Activated B cell treated with CpG ODN at 0.5 μM for 24 hours (primary cell): ENCODE measurements at regions of chr5 and their contacts with region 1.

Region 1: DNA sequence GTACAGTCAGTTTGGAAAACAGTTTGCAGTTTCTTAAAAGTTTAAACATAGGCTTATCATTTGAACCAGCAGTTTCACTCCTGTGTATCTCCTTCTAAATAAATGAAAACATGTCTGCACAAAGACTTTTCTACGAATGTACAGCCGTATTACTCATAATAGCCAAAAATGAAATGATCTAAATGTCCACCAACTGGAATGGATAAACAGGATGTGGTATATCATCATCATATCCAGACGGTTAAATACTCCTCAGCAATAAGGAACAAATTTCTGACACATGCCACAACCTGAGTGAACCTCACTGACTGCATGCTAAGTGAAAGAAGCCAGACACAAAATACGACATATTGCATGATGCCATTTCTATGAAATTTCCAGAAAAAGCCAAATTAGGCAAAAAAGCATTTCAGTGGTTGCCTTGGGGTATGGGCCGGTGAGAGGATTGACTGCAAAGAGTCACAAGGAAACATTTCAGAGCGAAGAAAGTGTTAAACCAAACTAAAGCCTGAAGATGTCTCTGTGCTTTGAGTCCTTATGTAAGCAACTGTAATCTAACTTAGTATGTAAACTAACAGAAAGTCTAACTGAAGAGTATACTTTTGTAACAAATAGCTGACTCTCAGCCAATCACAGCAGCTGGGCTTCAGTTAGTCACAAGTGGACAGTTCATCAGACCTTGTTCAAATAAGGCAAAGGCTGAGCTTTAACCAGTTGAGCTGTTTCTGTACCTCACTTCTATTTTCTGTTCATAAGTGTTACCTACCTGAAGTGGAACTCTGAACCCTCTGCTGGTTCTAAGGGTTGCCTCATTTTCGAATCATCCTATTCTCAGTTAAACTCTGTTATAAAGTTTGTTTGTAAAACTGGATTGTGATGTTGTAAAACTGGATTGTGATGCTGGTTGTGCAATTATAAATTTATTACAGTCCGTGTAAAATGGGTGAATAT is 65.2 kb downstream of the TRIO start:
- DNase-seq: no peak
- ATAC-seq: peak; percentile 29
- H3K4me3 Mint-ChIP-seq: peak overlapping the region; percentile 62
- H3K27ac Mint-ChIP-seq: peak overlapping the region; percentile 90
- H3K4me1 Mint-ChIP-seq: peaks cover 88% of the 10 kb centered on the region
- H3K27me3 Mint-ChIP-seq: no peaks in the 10 kb centered on the region
- CTCF ChIP-seq: no peak

Region 2: DNA sequence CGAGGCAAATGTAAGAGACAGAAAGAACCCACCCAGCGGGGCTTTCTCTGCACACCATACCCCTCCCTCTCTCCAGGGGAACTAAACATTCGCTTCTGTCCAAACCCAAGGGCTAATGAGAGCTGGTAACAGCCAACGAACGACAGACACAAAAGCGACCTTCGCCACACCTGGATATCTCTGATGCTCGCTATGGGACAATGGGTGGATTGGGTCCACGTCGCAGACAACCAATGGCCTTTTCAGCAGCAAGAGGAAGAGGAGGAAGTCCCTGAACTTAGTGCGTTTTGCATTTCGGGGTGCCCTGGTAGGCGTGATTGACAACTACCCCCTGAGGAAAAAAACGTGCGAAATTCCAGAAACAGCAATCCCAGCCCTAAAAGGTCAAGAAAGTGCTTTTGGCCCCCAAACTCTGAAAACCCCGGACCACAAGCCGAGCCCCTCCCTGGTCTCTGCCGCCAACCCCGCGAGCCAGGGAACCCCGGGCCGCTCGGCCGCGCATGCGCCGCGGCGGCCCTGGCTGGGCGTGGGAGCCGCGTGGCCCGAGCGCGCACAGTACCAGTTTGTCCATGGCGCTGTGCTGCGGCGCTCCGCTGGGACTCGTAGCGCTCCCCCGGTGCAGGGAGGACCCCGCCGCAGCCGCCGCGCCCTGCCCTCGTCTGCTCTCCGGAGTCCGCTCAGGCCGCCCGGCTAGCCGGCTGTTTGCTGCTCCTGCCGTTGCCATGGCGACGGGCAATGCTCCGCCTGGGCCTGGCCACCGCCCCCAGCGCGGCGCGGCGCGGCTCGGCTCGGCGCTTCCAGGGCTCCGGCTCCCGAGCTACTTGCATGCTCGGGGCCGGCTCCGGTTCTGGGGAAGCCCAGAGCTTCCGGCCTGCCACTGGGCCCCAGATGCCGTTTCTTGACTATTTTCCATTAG is 197.0 kb before region 1 on chr5:
- CTCF ChIA-PET with region 1: no interaction called
- POLR2A ChIA-PET with region 1: no interaction called
- intact Hi-C with region 1: loop called (anchors 2 kb)
- DNase-seq: peak; percentile 72
- ATAC-seq: peak; percentile 89
- H3K4me3 Mint-ChIP-seq: peak overlapping the region; percentile 85
- H3K27ac Mint-ChIP-seq: peak overlapping the region; percentile 73
- H3K4me1 Mint-ChIP-seq: peaks cover 10% of the 10 kb centered on the region
- H3K27me3 Mint-ChIP-seq: peaks cover 20% of the 10 kb centered on the region
- CTCF ChIP-seq: no peak

Region 3: DNA sequence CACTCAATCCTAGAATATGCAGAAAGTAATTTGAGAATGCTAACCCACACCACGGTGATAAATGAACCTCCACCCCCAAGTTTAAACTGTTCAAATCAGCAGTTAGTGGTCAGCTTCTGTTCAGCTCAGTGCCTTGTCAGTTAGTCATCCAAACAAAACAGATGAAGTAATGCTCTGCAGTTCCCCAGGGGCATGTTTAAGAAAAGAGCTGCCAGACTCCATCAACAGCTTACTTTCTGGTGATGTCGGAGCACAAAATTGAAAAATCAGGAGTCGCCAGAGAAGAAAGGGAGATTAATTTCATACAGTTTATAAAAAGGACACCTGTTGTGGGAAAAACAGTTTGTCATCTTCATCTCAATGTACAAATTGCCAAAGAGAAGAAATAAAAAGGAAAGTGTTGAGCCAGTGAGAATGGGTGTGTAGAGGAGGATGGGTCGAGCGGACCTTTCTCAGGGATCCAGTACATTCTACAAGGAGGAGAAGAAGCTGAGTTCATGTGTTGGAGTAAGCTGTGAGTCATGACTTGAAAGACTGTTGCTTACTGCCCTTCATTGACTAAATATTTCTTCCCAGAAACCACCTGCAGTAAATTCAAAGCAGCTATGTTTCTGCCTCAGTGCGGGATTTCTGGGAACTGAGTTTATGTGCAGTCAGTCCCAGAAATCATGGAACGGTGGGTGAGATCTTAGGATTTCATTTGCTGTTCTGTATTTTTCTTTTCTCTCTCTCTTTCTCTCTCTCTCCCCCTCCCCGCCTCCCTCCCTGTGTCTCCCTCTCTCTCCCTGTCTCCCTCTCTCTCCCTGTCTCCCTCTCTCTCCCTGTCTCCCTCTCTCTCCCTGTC is 51.5 kb before region 1 on chr5:
- CTCF ChIA-PET with region 1: interaction called, 8 read pairs
- POLR2A ChIA-PET with region 1: interaction called, 17 read pairs
- intact Hi-C with region 1: loop called (anchors 1 kb)
- DNase-seq: no peak
- ATAC-seq: peak; percentile 72
- H3K4me3 Mint-ChIP-seq: no peak overlapping the region
- H3K27ac Mint-ChIP-seq: no peak overlapping the region
- H3K4me1 Mint-ChIP-seq: peaks cover 34% of the 10 kb centered on the region
- H3K27me3 Mint-ChIP-seq: no peaks in the 10 kb centered on the region
- CTCF ChIP-seq: no peak

Region 4: GRCh38 chr5:14190194-14191164 is 17.9 kb before region 1 on chr5:
- CTCF ChIA-PET with region 1: no interaction called
- POLR2A ChIA-PET with region 1: interaction called, 6 read pairs
- intact Hi-C with region 1: loop called (anchors 2 kb)
- DNase-seq: no peak
- ATAC-seq: peak; percentile 21
- H3K4me3 Mint-ChIP-seq: peak overlapping the region; percentile 5
- H3K27ac Mint-ChIP-seq: peak overlapping the region; percentile 42
- H3K4me1 Mint-ChIP-seq: peaks cover 86% of the 10 kb centered on the region
- H3K27me3 Mint-ChIP-seq: no peaks in the 10 kb centered on the region
- CTCF ChIP-seq: no peak

Region 5: GRCh38 chr5:14264604-14265316 is 56.4 kb after region 1 on chr5:
- CTCF ChIA-PET with region 1: interaction called, 10 read pairs
- POLR2A ChIA-PET with region 1: interaction called, 4 read pairs
- intact Hi-C with region 1: loop called (anchors 2 kb)
- DNase-seq: peak; percentile 79
- ATAC-seq: peak; percentile 98
- H3K4me3 Mint-ChIP-seq: peak overlapping the region; percentile 81
- H3K27ac Mint-ChIP-seq: peak overlapping the region; percentile 69
- H3K4me1 Mint-ChIP-seq: peaks cover 78% of the 10 kb centered on the region
- H3K27me3 Mint-ChIP-seq: no peaks in the 10 kb centered on the region
- CTCF ChIP-seq: no peak

Region 6: GRCh38 chr5:14996997-14997396 is 788.7 kb after region 1 on chr5:
- CTCF ChIA-PET with region 1: no interaction called
- POLR2A ChIA-PET with region 1: no interaction called
- intact Hi-C with region 1: loop called (anchors 2 kb)
- DNase-seq: no peak
- ATAC-seq: peak; percentile 76
- H3K4me3 Mint-ChIP-seq: peak overlapping the region; percentile 15
- H3K27ac Mint-ChIP-seq: peak overlapping the region; percentile 75
- H3K4me1 Mint-ChIP-seq: peaks cover 59% of the 10 kb centered on the region
- H3K27me3 Mint-ChIP-seq: no peaks in the 10 kb centered on the region
- CTCF ChIP-seq: no peak